Activated CD4-positive, alpha-beta T cell treated with anti-CD3 and anti-CD28 coated beads, Interleukin-2, amount 10 ng/mL, durations not matched to agents 24 days and 14 days (primary cell): ENCODE measurements at regions of chr12 and their contacts with region 1.

Region 1: GRCh38 chr12:27779920-27780611 is at the starts of genes KLHL42 and MANSC4:
- DNase-seq: peak; percentile 91
- H3K4me3 Mint-ChIP-seq: peak within 1 kb of the TSS; percentile 84
- H3K27ac Mint-ChIP-seq: peak within 1 kb of the TSS; percentile 82
- H3K4me1 Mint-ChIP-seq: peaks cover 29% of the 10 kb centered on the region
- H3K27me3 Mint-ChIP-seq: peaks cover 20% of the 10 kb centered on the region
- total RNA-seq, gene KLHL42: 13.6 and 14.5 TPM in 2 replicates
- total RNA-seq, gene MANSC4: not detected in 2 replicates

Region 2: DNA sequence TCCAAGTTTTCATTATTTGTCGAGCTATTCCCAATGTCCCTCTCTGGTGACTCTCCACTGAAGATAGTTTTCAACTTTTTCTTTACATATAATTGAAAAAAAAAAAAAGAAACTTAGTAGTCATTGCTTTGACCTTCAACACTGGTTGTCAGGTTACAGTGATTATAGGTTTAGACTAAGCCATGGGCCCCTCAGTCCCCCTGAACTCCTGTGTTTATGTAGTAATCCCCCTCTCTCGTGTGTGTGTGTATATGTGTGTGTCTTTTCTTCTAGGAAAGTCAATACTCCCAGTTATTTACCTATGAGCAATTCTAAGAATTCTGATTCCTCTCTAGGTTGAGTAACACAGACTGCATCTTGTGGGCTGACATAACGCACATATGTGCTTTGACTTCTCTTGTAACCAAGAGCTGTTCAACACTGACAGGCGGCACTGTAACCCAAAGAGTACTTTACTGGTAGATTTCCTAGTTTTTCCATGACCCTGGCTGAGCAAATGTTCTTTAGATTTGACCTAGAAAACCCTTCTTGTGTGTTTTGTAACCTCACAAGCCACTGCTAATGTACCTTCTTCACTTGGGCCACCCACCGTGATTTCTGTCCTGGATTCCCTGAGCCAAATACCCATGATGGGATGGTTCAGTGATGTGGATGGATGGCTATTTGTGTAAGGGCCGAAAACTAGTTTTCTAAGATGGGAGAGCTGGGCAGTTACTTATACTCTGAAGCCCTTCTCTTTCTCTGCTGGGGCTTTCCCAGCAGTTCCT is 14.9 kb after region 1 on chr12:
- intact Hi-C with region 1: no loop called
- DNase-seq: no peak
- H3K4me3 Mint-ChIP-seq: no peak overlapping the region
- H3K27ac Mint-ChIP-seq: no peak overlapping the region
- H3K4me1 Mint-ChIP-seq: peaks cover 7% of the 10 kb centered on the region
- H3K27me3 Mint-ChIP-seq: no peaks in the 10 kb centered on the region

Region 3: DNA sequence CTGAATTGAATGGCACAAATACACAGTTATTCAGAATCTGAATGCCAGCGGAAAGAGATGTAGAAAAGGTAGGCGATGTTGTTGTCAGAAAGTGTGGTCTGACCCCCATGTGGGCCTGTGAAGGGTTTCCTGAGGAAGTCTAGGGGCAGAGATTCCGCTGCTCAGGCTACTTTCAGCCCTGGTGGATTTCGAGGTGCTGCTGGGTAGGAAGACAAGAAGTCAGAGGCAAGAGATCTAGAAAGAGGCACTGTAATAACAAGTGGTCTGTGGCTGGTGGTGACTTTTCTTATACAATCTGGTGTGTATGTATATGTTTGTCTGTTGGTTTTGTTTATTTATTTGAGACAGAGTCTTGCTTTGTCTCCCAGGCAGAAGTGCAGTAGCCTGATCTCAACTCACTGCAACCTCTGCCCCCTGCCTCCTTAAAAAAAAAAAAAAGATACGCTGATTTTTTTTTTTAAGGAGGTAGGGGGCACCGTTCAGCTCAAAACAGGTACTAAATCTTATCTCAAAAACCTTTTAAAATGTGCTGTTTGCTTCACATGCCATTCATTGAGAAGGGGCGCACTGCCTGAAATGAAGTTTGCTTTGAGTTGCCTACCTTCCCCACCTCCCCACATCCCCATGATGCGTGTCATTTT is 27.1 kb after region 1 on chr12:
- intact Hi-C with region 1: loop called (anchors 2 kb)
- DNase-seq: peak; percentile 65
- H3K4me3 Mint-ChIP-seq: peak overlapping the region; percentile 3
- H3K27ac Mint-ChIP-seq: peak overlapping the region; percentile 43
- H3K4me1 Mint-ChIP-seq: peaks cover 17% of the 10 kb centered on the region
- H3K27me3 Mint-ChIP-seq: peaks cover 10% of the 10 kb centered on the region

Region 4: GRCh38 chr12:27896419-27896990 is 116.4 kb after region 1 on chr12:
- intact Hi-C with region 1: no loop called
- DNase-seq: peak; percentile 10
- H3K4me3 Mint-ChIP-seq: no peak overlapping the region
- H3K27ac Mint-ChIP-seq: no peak overlapping the region
- H3K4me1 Mint-ChIP-seq: no peaks in the 10 kb centered on the region
- H3K27me3 Mint-ChIP-seq: peaks cover 16% of the 10 kb centered on the region